Activated B cell treated with CpG ODN at 0.5 μM for 24 hours (primary cell): ENCODE measurements at regions of chr2 and their contacts with region 1.

Region 1: DNA sequence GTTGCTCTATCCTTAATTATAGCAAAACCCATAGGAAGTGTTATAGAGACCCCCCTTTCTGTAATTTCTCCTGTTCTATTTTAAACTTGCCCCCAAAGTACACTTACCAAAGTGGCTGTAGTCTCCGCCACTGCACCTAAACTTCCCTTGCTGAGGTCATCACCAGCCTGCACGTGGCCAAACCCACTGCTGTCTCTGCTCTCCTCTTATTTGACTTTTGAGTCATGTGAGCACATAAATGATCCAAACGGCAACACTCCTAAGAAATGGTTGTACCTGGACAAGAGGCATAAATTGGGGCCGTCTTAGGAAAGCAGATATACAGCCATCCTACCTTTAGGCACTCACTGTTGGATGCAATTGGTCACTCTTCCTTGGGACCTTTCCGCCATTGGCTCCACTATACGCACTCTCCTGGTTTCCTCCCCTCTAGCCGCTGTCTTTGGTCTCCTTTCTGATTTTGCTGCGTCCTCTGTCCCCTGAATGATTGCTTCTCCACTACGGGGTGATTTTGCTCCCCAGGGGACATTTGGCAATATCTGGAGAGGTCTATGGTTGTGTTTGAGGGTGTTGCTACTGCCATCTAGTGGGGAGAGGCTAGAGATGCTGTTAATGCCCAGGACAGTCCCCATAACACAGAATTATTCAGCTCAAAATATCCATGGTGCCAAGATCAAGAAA is 19.2 kb upstream of the IL36G start:
- DNase-seq: no peak
- ATAC-seq: peak; percentile 82
- H3K4me3 Mint-ChIP-seq: no peak overlapping the region
- H3K27ac Mint-ChIP-seq: no peak overlapping the region
- H3K4me1 Mint-ChIP-seq: no peaks in the 10 kb centered on the region
- H3K27me3 Mint-ChIP-seq: no peaks in the 10 kb centered on the region
- CTCF ChIP-seq: no peak

Region 2: DNA sequence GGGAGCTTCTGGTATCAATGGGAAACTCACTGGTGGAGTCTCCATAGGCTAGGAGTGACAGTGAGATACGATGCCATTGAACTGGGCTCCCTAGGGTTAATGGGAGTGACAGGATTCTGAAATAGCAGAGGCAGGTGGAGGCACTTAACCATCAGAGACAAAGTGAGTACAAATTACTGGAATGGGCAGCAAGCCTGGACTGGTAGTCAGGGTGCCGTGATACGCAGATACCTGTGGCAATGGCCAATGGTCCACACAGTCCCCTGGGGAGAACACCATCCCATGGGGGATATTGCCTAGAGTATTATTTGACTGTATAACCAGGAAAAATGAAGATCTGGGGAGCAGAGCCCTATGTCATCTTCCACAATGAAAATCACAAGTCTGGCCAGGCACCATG is 356.8 kb before region 1 on chr2:
- CTCF ChIA-PET with region 1: no interaction called
- POLR2A ChIA-PET with region 1: no interaction called
- intact Hi-C with region 1: loop called (anchors 5 kb)
- DNase-seq: no peak
- ATAC-seq: no peak
- H3K4me3 Mint-ChIP-seq: no peak overlapping the region
- H3K27ac Mint-ChIP-seq: no peak overlapping the region
- H3K4me1 Mint-ChIP-seq: peaks cover 6% of the 10 kb centered on the region
- H3K27me3 Mint-ChIP-seq: no peaks in the 10 kb centered on the region
- CTCF ChIP-seq: no peak

Region 3: GRCh38 chr2:112941753-112942658 is 16.6 kb before region 1 on chr2:
- CTCF ChIA-PET with region 1: interaction called, 19 read pairs
- POLR2A ChIA-PET with region 1: no interaction called
- intact Hi-C with region 1: no loop called
- DNase-seq: peak; percentile 29
- ATAC-seq: peak; percentile 71
- H3K4me3 Mint-ChIP-seq: no peak overlapping the region
- H3K27ac Mint-ChIP-seq: no peak overlapping the region
- H3K4me1 Mint-ChIP-seq: no peaks in the 10 kb centered on the region
- H3K27me3 Mint-ChIP-seq: peaks cover 7% of the 10 kb centered on the region
- CTCF ChIP-seq: no peak

Region 4: GRCh38 chr2:112947374-112947773 is 11.2 kb before region 1 on chr2:
- CTCF ChIA-PET with region 1: interaction called, 19 read pairs
- POLR2A ChIA-PET with region 1: no interaction called
- intact Hi-C with region 1: no loop called
- DNase-seq: no peak
- ATAC-seq: no peak
- H3K4me3 Mint-ChIP-seq: no peak overlapping the region
- H3K27ac Mint-ChIP-seq: no peak overlapping the region
- H3K4me1 Mint-ChIP-seq: no peaks in the 10 kb centered on the region
- H3K27me3 Mint-ChIP-seq: peaks cover 18% of the 10 kb centered on the region
- CTCF ChIP-seq: no peak